PC-3 (cell line): ENCODE measurements at regions of chr6 and their contacts with region 1.

Region 1: GRCh38 chr6:99119109-99120031 is 171.6 kb upstream of the FBXL4 start:
- DNase-seq: peak; percentile 57
- ATAC-seq: peak; percentile 65
- H3K4me3 ChIP-seq: no peak overlapping the region
- H3K27ac ChIP-seq: no peak overlapping the region
- H3K4me1 ChIP-seq: no peaks in the 10 kb centered on the region
- H3K27me3 ChIP-seq: peaks cover 19% of the 10 kb centered on the region
- CTCF ChIP-seq: peak; percentile 70

Region 2: GRCh38 chr6:97497713-97498331 is 1621.5 kb before region 1 on chr6:
- CTCF ChIA-PET with region 1: no interaction called
- POLR2A ChIA-PET with region 1: no interaction called
- intact Hi-C with region 1: loop called (anchors 1 kb)
- DNase-seq: peak; percentile 68
- ATAC-seq: peak; percentile 84
- H3K4me3 ChIP-seq: no peak overlapping the region
- H3K27ac ChIP-seq: no peak overlapping the region
- H3K4me1 ChIP-seq: no peaks in the 10 kb centered on the region
- H3K27me3 ChIP-seq: peaks cover 8% of the 10 kb centered on the region; the same call in 1 of the 2 replicates
- CTCF ChIP-seq: peak; percentile 80

Region 3: GRCh38 chr6:98769544-98769943 is 349.8 kb before region 1 on chr6:
- CTCF ChIA-PET with region 1: interaction called, 3 read pairs
- POLR2A ChIA-PET with region 1: no interaction called
- intact Hi-C with region 1: loop called (anchors 1 kb)
- DNase-seq: peak; percentile 47
- ATAC-seq: peak; percentile 62
- H3K4me3 ChIP-seq: no peak overlapping the region
- H3K27ac ChIP-seq: no peak overlapping the region
- H3K4me1 ChIP-seq: no peaks in the 10 kb centered on the region
- H3K27me3 ChIP-seq: peaks cover 13% of the 10 kb centered on the region; the same call in 1 of the 2 replicates
- CTCF ChIP-seq: peak; percentile 51; the same call in 1 of the 2 replicates